MCF 10A (cell line): ENCODE measurements at regions of chr17 and their contacts with region 1.

Region 1: DNA sequence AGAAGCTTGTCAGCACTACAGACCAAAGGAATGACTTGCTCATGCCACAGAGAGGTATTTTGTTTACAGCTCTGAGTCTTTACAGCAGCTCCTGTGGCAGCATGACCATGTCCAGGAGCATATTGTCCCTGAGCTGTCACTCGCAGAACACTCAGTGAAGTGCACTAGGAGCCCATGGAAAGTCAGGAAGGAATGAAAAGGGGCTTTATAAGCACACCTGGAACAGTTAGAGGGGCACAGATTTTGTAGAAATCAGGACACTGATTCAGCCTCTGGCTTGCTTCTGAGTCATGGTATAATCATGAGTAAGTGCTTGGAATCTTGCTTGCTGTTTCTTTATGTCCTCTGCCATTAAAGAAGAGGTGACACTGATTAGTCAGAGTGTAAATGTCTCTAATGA is 41.0 kb downstream of the TADA2A start:
- DNase-seq: peak; percentile 29
- H3K4me3 Mint-ChIP-seq: no peak overlapping the region
- H3K27ac Mint-ChIP-seq: peak overlapping the region; percentile 33
- H3K4me1 Mint-ChIP-seq: peaks cover 22% of the 10 kb centered on the region
- H3K27me3 Mint-ChIP-seq: no peaks in the 10 kb centered on the region
- CTCF ChIP-seq: no peak

Region 2: DNA sequence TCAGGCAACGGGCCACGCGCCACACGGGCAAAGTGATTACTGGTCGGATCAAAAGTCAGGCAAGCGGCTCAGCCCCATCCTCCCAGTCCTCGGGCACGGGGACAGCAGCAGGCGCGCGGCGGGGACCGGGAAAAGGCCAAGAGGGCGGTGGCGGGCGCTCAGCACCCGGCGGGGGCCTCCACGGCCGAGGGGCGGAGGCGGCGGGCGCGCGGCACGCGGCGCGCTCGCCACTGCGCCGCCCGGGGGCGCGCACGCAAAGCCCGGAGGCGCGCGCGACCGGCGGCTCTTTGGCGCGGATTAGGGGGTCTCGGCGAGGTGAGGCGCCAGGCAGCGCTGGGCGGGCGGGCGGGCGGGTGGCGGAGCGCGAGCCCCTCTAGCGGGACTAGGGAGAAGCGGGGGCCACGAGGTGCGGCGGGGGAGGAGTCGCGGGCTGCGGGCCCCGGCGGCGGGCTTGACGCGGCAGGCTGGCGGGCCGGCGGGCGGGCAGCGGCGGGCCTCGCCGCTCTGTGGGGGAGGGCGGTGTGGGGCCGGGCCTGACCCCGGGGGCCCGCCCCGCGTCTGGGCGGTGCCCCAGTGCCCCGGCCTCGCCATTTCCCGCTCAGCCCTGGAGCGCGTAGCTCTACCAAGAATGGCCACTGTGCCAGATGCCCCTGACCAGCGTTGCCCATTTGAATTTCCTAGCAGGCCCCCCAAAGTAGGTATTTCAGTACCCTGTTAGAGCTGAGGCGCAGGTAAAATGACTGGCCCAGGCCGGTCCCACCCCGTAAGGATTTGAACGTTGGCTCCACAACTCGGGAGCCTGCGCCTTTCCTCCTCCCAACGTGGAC is 40.8 kb before region 1 on chr17 and contains the starts of genes ACACA and TADA2A:
- CTCF ChIA-PET with region 1: interaction called, 3 read pairs
- POLR2A ChIA-PET with region 1: interaction called, 10 read pairs
- intact Hi-C with region 1: no loop called
- DNase-seq: peak; percentile 81
- H3K4me3 Mint-ChIP-seq: peak within 1 kb of the TSS; percentile 95
- H3K27ac Mint-ChIP-seq: peak within 1 kb of the TSS; percentile 52
- H3K4me1 Mint-ChIP-seq: peaks cover 10% of the 10 kb centered on the region
- H3K27me3 Mint-ChIP-seq: no peaks in the 10 kb centered on the region
- CTCF ChIP-seq: no peak
- total RNA-seq, gene ACACA: 88.6 and 100 TPM in 2 replicates
- total RNA-seq, gene TADA2A: 25.3 and 31.3 TPM in 2 replicates

Region 3: DNA sequence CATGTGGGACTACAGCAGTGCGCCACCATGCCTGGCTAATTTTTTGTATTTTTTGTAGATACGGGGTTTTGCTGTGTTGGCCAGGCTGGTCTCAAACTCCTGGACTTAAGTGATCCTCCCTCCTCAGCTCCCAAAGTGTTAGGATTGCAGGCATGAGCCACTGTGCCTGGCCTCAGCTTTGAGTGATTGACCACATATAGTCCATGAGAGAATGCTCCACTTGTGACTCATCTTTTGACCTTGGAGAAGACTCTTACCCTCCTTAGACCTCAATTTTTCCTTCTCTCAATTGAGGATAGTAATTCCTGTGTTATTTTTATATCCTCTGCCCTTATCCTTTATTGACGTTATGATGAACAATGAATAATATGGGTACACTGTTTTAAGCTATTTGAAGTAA is 11.2 kb after region 1 on chr17:
- CTCF ChIA-PET with region 1: interaction called, 3 read pairs
- POLR2A ChIA-PET with region 1: interaction called, 10 read pairs
- intact Hi-C with region 1: no loop called
- DNase-seq: no peak
- H3K4me3 Mint-ChIP-seq: no peak overlapping the region
- H3K27ac Mint-ChIP-seq: no peak overlapping the region
- H3K4me1 Mint-ChIP-seq: peaks cover 5% of the 10 kb centered on the region
- H3K27me3 Mint-ChIP-seq: no peaks in the 10 kb centered on the region
- CTCF ChIP-seq: no peak

Region 4: DNA sequence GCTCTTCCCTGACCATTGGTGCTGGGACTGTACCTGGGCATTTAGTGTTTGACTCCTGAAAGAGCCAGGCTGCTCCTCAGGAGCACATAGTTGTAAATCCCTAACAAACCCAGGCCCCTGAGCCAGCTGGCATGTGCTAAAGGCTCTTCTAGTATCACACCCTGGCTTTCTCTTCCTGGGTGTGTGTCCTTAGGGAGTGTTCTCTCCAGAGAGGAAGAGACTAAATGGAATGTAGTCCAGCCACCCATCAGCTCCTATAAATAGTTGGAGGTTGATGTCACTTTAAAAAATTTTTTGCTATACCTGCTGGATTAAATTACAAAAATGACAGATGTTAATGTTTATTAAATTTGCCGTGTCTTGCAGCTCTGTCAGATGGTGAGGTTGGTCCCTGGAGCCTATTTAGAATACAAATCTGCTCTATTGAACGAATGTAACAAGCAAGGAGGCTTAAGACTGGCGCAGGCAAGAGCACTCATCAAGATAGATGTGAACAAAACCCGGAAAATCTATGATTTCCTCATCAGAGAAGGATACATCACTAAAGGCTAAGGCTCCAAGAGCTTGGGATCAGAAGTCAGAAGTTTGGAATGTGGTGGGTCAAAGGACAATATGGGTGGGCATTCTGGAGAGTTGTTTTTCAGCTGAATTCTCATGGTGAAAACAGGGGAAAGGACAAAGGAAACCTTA is 28.9 kb after region 1 on chr17:
- CTCF ChIA-PET with region 1: no interaction called
- POLR2A ChIA-PET with region 1: interaction called, 13 read pairs
- intact Hi-C with region 1: no loop called
- DNase-seq: no peak
- H3K4me3 Mint-ChIP-seq: no peak overlapping the region
- H3K27ac Mint-ChIP-seq: peak overlapping the region; percentile 75
- H3K4me1 Mint-ChIP-seq: peaks cover 27% of the 10 kb centered on the region
- H3K27me3 Mint-ChIP-seq: no peaks in the 10 kb centered on the region
- CTCF ChIP-seq: no peak